ENCODE measurements at regions of chr12 and their contacts with region 1.

Region 1: GRCh38 chr12:132771126-132771838 is 9.7 kb upstream of the ANKLE2 start:
- DNase-seq: no peak
- ATAC-seq: no peak
- H3K4me3 ChIP-seq: no peak overlapping the region
- H3K27ac ChIP-seq: peak overlapping the region in 1 of 10 donors; percentile 89
- H3K4me1 ChIP-seq: peaks cover 0 to 57% (median 12%) of the 10 kb centered on the region in 9 donors
- H3K27me3 ChIP-seq: no peaks in the 10 kb centered on the region
- CTCF ChIP-seq: no peak

Region 2: DNA sequence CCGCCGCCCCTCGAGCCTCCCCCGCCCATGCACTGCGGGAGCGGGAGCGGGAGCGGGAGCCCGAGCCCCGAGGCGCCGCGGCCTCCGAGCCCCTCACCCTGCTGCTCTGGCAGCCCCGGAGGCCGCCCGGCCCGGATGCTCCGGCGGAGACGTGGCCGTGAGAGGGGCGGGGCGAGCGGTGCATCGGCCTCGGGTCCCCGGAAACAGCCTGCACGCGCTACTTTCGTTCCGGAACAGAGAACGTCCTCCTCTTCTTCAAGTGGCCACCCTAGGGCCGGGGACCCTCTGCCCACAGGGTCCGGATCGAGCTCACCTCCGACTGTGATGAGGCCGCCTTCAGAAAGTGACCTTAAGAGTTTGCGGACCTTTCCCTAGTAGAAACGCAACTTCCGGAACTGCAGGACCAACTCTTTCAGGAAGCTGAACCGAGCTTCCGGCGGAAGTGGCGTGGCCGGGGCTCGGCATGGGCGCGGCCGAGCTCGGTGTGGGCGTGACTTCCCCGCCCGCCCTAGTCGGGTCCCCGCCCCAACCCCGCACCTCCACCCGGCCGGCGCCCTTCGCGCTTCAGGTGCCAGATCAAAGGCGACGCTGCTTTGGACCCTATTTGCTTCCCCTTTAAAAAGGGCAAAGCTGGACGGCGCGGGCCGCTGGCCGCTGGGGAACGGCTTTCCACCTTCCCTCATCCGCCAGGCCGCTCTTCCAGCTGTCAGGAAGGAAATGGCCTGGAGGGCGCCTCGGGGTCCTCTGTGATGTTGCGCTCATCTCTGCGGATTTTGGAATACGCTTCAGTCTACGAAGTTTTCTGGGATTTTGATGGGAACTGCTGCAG is 57.6 kb after region 1 on chr12 and contains the start of gene GOLGA3:
- intact Hi-C with region 1: loop called in 1 of 10 experiments (anchors 10 kb)
- DNase-seq: peak; percentile 93 to 94
- ATAC-seq: peak; percentile 96 to 99 (median 98)
- H3K4me3 ChIP-seq: peak within 1 kb of the TSS; percentile 34 to 98 (median 80)
- H3K27ac ChIP-seq: peak within 1 kb of the TSS; percentile 91 to 99 (median 96)
- H3K4me1 ChIP-seq: peaks cover 0 to 29% (median 22%) of the 10 kb centered on the region in 9 donors
- H3K27me3 ChIP-seq: no peaks in the 10 kb centered on the region
- CTCF ChIP-seq: no peak
- total RNA-seq, gene GOLGA3: 27.7 to 46.1 (median 35.7) TPM

Region 3: GRCh38 chr12:133203344-133204263 is 432.3 kb after region 1 on chr12:
- intact Hi-C with region 1: no loop called
- DNase-seq: no peak
- ATAC-seq: no peak
- H3K4me3 ChIP-seq: no peak overlapping the region
- H3K27ac ChIP-seq: no peak overlapping the region
- H3K4me1 ChIP-seq: no peaks in the 10 kb centered on the region
- H3K27me3 ChIP-seq: no peaks in the 10 kb centered on the region
- CTCF ChIP-seq: no peak